ENCODE measurements at regions of chr5 and their contacts with region 1.

Region 1: GRCh38 chr5:1488943-1489680 is 34.6 kb downstream of the LPCAT1 start:
- DNase-seq: peak; percentile 85
- ATAC-seq: peak; percentile 86
- H3K4me3 Mint-ChIP-seq: peak overlapping the region; percentile 55
- H3K27ac Mint-ChIP-seq: peak overlapping the region; percentile 91
- H3K4me1 Mint-ChIP-seq: peaks cover 82% of the 10 kb centered on the region
- H3K27me3 Mint-ChIP-seq: no peaks in the 10 kb centered on the region

Region 2: GRCh38 chr5:1460054-1460682 is 28.9 kb before region 1 on chr5:
- CTCF ChIA-PET with region 1: no interaction called
- DNase-seq: no peak
- ATAC-seq: no peak
- H3K4me3 Mint-ChIP-seq: no peak overlapping the region
- H3K27ac Mint-ChIP-seq: no peak overlapping the region
- H3K4me1 Mint-ChIP-seq: no peaks in the 10 kb centered on the region
- H3K27me3 Mint-ChIP-seq: peaks cover under 1% of the 10 kb centered on the region

Region 3: GRCh38 chr5:1503241-1504068 is 14.3 kb after region 1 on chr5:
- CTCF ChIA-PET with region 1: interaction called, 10 read pairs
- DNase-seq: no peak
- ATAC-seq: peak; percentile 34
- H3K4me3 Mint-ChIP-seq: no peak overlapping the region
- H3K27ac Mint-ChIP-seq: peak overlapping the region; percentile 29
- H3K4me1 Mint-ChIP-seq: peaks cover 31% of the 10 kb centered on the region
- H3K27me3 Mint-ChIP-seq: no peaks in the 10 kb centered on the region

Measured in activated CD8-positive, alpha-beta memory T cell treated with anti-CD3 and anti-CD28 coated beads, Interleukin-2, amount 10 ng/mL, durations not matched to agents 7 days and 5 days (primary cell).